Activated CD4-positive, alpha-beta T cell treated with anti-CD3 and anti-CD28 coated beads for 36 hours (primary cell): ENCODE measurements at regions of chr20 and their contacts with region 1.

Region 1: GRCh38 chr20:52269321-52269720 is 77.7 kb upstream of the ZFP64 start:
- DNase-seq: no peak
- ATAC-seq: no peak
- H3K4me3 Mint-ChIP-seq: no peak overlapping the region
- H3K27ac Mint-ChIP-seq: no peak overlapping the region
- H3K4me1 Mint-ChIP-seq: no peaks in the 10 kb centered on the region
- H3K27me3 Mint-ChIP-seq: peaks cover 12% of the 10 kb centered on the region

Region 2: DNA sequence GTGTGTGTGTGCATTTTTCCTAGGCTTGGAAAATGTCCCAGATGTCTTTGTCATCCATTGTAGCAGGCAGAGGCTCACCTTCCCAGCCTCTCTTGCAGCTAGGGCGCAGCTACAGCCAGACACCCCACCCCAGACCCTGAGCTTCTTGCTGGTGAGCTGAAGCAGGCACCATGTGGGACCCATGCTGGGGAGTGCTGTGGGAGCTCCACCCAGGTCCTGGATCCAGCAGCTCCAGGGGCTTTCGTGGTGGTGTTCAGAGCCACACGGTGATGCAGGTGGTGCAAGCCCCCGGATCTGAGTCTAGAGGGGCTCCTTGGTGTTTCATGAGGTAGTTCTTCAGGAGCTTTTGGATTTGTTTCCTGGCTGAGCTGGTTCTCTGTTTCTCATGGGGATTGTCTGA is 21.8 kb before region 1 on chr20:
- CTCF ChIA-PET with region 1: no interaction called
- POLR2A ChIA-PET with region 1: interaction called, 12 read pairs
- intact Hi-C with region 1: no loop called
- DNase-seq: no peak
- ATAC-seq: no peak
- H3K4me3 Mint-ChIP-seq: no peak overlapping the region
- H3K27ac Mint-ChIP-seq: no peak overlapping the region
- H3K4me1 Mint-ChIP-seq: no peaks in the 10 kb centered on the region
- H3K27me3 Mint-ChIP-seq: peaks cover 3% of the 10 kb centered on the region